Thyroid gland (tissue), 4 donors: ENCODE measurements at regions of chr11 and their contacts with region 1.

Region 1: GRCh38 chr11:65779851-65780577 is 762 bp downstream of the AP5B1 start:
- DNase-seq: peak; percentile 78 to 85
- H3K4me3 ChIP-seq: peak overlapping the region; percentile 67 to 88 (median 86)
- H3K27ac ChIP-seq: peak overlapping the region; percentile 47 to 73 (median 71)
- H3K4me1 ChIP-seq: peaks cover 9 to 26% of the 10 kb centered on the region in 2 donors
- H3K27me3 ChIP-seq: no peaks in the 10 kb centered on the region
- CTCF ChIP-seq: peak; percentile 88 to 98 (median 96)
- POLR2A ChIP-seq: peak in 1 of 2 donors; percentile 39

Region 2: GRCh38 chr11:65711785-65712632 is 68.0 kb before region 1 on chr11 and contains the start of gene KAT5:
- intact Hi-C with region 1: loop called (anchors 5 kb)
- DNase-seq: peak; percentile 99
- H3K4me3 ChIP-seq: peak within 1 kb of the TSS; percentile 36 to 81 (median 65)
- H3K27ac ChIP-seq: peak within 1 kb of the TSS; percentile 97 to 100 (median 99)
- H3K4me1 ChIP-seq: peaks cover 6 to 9% of the 10 kb centered on the region in 2 donors
- H3K27me3 ChIP-seq: no peaks in the 10 kb centered on the region
- CTCF ChIP-seq: peak; percentile 95 to 100 (median 98)
- POLR2A ChIP-seq: peak; percentile 68 to 89
- total RNA-seq, gene KAT5: 78.5 to 114 (median 81.1) TPM

Region 3: DNA sequence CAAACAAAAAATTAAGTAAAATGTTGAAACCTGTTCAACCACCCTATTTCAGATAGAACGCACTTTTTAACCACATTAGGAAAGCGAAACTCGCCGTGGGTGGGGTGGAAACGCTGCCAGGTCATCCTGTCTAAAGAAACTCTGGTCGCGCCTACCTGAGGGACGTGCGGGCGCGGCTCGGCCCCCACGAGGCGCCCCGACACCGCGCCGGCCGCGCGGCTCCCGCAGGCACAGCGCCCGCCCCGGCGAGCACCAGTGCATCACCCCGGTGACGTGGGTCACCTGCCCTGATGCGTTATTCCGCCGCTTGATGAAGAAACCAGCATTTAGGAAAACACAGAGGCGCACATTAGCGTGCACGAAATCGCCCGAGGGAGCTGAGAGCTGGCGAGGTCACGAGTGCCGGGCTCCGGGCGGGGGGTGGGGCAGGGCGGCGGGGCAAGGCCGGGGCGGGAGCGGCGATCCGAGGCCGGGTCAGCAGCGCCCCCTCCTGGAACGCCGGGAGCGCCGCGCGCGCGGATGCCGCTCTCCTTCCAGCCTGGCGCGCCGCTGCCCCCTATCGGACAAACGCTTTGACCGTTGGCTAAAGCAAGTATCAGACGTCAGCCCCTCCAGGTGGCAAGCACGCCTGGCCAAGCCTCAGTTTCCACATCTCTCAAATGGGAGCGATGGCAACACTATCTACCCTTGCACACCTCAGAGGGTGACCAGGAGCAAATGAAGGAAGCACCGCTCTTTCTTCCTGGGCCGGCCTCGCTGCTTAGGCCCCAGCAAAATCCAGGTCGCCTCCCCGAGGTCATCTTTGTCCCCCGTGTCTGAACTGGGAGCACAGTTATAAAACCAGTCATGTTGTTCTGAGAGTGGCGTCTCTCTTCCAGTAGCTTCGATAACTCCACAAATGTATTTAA is 38.1 kb after region 1 on chr11:
- intact Hi-C with region 1: loop called (anchors 2 kb)
- DNase-seq: peak; percentile 93 to 96
- H3K4me3 ChIP-seq: peak overlapping the region; percentile 41 to 67 (median 64)
- H3K27ac ChIP-seq: peak overlapping the region; percentile 71 to 89 (median 72)
- H3K4me1 ChIP-seq: peaks cover 4 to 15% of the 10 kb centered on the region in 2 donors
- H3K27me3 ChIP-seq: no peaks in the 10 kb centered on the region
- CTCF ChIP-seq: peak; percentile 93 to 100 (median 99)
- POLR2A ChIP-seq: peak in 1 of 2 donors; percentile 40

Region 4: GRCh38 chr11:65988791-65989592 is 209.0 kb after region 1 on chr11:
- intact Hi-C with region 1: no loop called
- DNase-seq: peak; percentile 92 to 93
- H3K4me3 ChIP-seq: no peak overlapping the region
- H3K27ac ChIP-seq: no peak overlapping the region
- H3K4me1 ChIP-seq: no peaks in the 10 kb centered on the region
- H3K27me3 ChIP-seq: no peaks in the 10 kb centered on the region
- CTCF ChIP-seq: peak; percentile 72 to 100 (median 96)
- POLR2A ChIP-seq: no peak

Region 5: GRCh38 chr11:66172143-66172542 is 392.1 kb after region 1 on chr11:
- intact Hi-C with region 1: no loop called
- DNase-seq: peak; percentile 20 to 21
- H3K4me3 ChIP-seq: no peak overlapping the region
- H3K27ac ChIP-seq: no peak overlapping the region
- H3K4me1 ChIP-seq: no peaks in the 10 kb centered on the region
- H3K27me3 ChIP-seq: no peaks in the 10 kb centered on the region
- CTCF ChIP-seq: no peak
- POLR2A ChIP-seq: no peak